CD4-positive, alpha-beta memory T cell (primary cell): ENCODE measurements at regions of chr17 and their contacts with region 1.

Region 1: DNA sequence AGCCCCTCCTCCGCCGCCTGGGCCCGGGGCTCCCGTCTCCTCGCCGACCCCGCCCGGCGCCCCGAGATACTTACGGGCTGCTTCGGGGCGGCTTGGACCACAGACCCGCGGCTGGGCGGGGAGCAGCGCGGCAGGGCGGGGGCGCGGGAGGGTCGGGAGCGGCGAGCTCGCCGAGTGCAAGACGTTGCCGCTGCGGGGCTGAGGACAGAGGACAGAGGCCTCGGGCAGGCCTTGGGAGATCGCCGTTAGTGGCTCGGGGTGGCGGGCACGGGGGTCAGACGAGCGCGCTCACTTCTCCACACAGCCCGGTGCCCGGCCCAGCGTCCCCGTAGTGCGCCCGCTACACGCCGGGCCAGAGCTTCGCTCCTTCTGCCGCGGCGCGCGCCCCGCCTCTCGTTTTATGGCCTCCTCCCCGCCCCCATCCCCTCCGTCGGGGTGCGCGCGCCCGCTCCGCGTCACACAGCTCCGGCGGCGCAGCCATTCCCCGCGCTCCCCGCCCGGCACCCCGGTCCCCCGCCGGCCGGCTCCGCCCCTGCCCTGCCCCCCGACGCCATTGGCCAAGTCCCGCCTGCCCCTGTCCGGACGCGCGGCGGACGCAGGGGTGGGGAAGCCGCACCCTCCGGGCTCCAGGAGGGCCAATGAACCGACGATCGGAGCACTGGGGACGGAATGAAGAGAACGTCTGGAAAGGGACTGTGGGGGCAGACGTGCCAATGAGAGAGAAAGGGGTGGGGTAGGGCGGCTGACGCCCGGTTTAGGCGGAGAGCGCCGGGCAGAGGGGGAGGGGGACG is at the start of gene TOB1:
- DNase-seq: peak; percentile 94 to 97 (median 95)
- H3K4me3 ChIP-seq: peak within 1 kb of the TSS; percentile 87 to 92
- H3K4me3 Mint-ChIP-seq: peak within 1 kb of the TSS; percentile 97 to 100 (median 98)
- H3K27ac ChIP-seq: peak within 1 kb of the TSS; percentile 97
- H3K27ac Mint-ChIP-seq: peak within 1 kb of the TSS; percentile 96 to 100 (median 99)
- H3K4me1 ChIP-seq: peaks cover 67% of the 10 kb centered on the region
- H3K4me1 Mint-ChIP-seq: peaks cover 38 to 73% (median 51%) of the 10 kb centered on the region in 4 donors
- H3K27me3 ChIP-seq: no peaks in the 10 kb centered on the region
- H3K27me3 Mint-ChIP-seq: no peaks in the 10 kb centered on the region
- total RNA-seq, gene TOB1: 93.7 to 104 TPM

Region 2: GRCh38 chr17:50765454-50766221 is 100.5 kb before region 1 on chr17:
- CTCF ChIA-PET with region 1: no interaction called
- POLR2A ChIA-PET with region 1: no interaction called
- intact Hi-C with region 1: no loop called
- DNase-seq: no peak
- H3K4me3 ChIP-seq: no peak overlapping the region
- H3K4me3 Mint-ChIP-seq: no peak overlapping the region
- H3K27ac ChIP-seq: no peak overlapping the region
- H3K27ac Mint-ChIP-seq: peak overlapping the region in 1 of 7 donors; percentile 75
- H3K4me1 ChIP-seq: peaks cover 7% of the 10 kb centered on the region
- H3K4me1 Mint-ChIP-seq: peaks cover 2 to 20% (median 10%) of the 10 kb centered on the region in 4 donors
- H3K27me3 ChIP-seq: no peaks in the 10 kb centered on the region
- H3K27me3 Mint-ChIP-seq: peaks cover 6 to 8% of the 10 kb centered on the region in 2 donors

Region 3: GRCh38 chr17:50783193-50783660 is 83.0 kb before region 1 on chr17:
- CTCF ChIA-PET with region 1: interaction called, 4 read pairs
- POLR2A ChIA-PET with region 1: interaction called, 26 read pairs
- intact Hi-C with region 1: no loop called
- DNase-seq: peak; percentile 70 to 76 (median 72)
- H3K4me3 ChIP-seq: no peak overlapping the region
- H3K4me3 Mint-ChIP-seq: peak overlapping the region in 4 of 8 donors; percentile 45 to 75 (median 62)
- H3K27ac ChIP-seq: no peak overlapping the region
- H3K27ac Mint-ChIP-seq: peak overlapping the region in 3 of 7 donors; percentile 31 to 78 (median 43)
- H3K4me1 ChIP-seq: peaks cover 29% of the 10 kb centered on the region
- H3K4me1 Mint-ChIP-seq: peaks cover 20 to 42% (median 31%) of the 10 kb centered on the region in 4 donors
- H3K27me3 ChIP-seq: no peaks in the 10 kb centered on the region
- H3K27me3 Mint-ChIP-seq: peaks cover 5% of the 10 kb centered on the region in 2 donors

Region 4: DNA sequence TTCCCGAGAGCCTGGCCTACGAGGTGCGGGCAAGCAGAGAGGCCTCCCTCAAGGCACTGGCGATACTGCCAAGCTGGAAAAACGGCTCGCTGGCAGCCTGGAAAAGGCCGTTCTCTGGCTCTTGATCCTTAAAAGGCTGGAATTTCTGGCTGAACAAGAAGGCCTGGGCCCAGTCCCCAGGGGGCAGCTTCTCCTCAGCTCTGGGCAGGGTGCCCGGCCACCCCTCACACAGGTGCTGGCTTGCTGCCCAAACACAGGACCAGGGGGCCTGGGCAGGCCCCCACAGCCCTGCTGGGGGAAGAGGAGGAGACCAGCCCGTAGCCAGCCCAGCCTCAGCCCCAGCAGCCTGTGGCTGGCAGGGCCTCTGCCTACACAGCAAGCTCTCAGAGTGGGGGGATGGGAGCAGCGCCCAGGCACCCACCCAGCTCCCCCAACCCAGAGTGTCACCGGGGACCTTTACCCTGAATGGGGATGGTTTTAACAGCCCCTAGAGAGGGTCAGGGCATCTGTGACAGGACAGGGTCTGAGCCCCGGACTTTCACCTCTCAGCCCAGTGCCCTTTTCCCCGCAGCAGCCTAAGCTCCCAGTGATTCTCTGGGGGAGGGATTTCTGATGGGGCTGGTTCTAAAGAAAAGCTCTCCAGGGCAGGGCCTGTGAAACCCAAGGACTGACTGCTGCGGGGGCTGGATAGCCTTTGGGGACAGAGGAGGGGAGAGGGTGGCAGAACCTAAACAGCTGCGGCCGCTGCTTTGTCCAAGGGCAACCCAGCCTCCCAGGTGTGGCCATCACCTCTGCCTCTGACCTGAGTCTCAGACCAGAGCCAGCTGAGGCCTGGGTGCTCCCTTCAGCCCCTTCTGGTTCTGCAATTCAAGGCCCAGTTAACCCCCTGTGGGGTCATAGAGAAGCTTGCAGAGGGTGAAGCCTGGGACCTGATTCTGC is 38.6 kb after region 1 on chr17:
- CTCF ChIA-PET with region 1: interaction called, 10 read pairs
- POLR2A ChIA-PET with region 1: interaction called, 688 read pairs
- intact Hi-C with region 1: no loop called
- DNase-seq: no peak
- H3K4me3 ChIP-seq: no peak overlapping the region
- H3K4me3 Mint-ChIP-seq: peak overlapping the region in 4 of 8 donors; percentile 22 to 79 (median 65)
- H3K27ac ChIP-seq: peak overlapping the region; percentile 66
- H3K27ac Mint-ChIP-seq: peak overlapping the region; percentile 71 to 97 (median 96)
- H3K4me1 ChIP-seq: peaks cover 66% of the 10 kb centered on the region
- H3K4me1 Mint-ChIP-seq: peaks cover 39 to 72% (median 51%) of the 10 kb centered on the region in 4 donors
- H3K27me3 ChIP-seq: no peaks in the 10 kb centered on the region
- H3K27me3 Mint-ChIP-seq: no peaks in the 10 kb centered on the region

Region 5: GRCh38 chr17:50931144-50931908 is 65.1 kb after region 1 on chr17:
- CTCF ChIA-PET with region 1: interaction called, 4 read pairs
- POLR2A ChIA-PET with region 1: interaction called, 688 read pairs
- intact Hi-C with region 1: loop called (anchors 1 kb)
- DNase-seq: peak; percentile 57 to 68 (median 61)
- H3K4me3 ChIP-seq: peak overlapping the region in 1 of 2 donors; percentile 45
- H3K4me3 Mint-ChIP-seq: peak overlapping the region; percentile 86 to 95 (median 88)
- H3K27ac ChIP-seq: peak overlapping the region; percentile 49
- H3K27ac Mint-ChIP-seq: peak overlapping the region; percentile 75 to 99 (median 96)
- H3K4me1 ChIP-seq: peaks cover 35% of the 10 kb centered on the region
- H3K4me1 Mint-ChIP-seq: peaks cover 14 to 63% (median 36%) of the 10 kb centered on the region in 4 donors
- H3K27me3 ChIP-seq: no peaks in the 10 kb centered on the region
- H3K27me3 Mint-ChIP-seq: no peaks in the 10 kb centered on the region

Region 6: DNA sequence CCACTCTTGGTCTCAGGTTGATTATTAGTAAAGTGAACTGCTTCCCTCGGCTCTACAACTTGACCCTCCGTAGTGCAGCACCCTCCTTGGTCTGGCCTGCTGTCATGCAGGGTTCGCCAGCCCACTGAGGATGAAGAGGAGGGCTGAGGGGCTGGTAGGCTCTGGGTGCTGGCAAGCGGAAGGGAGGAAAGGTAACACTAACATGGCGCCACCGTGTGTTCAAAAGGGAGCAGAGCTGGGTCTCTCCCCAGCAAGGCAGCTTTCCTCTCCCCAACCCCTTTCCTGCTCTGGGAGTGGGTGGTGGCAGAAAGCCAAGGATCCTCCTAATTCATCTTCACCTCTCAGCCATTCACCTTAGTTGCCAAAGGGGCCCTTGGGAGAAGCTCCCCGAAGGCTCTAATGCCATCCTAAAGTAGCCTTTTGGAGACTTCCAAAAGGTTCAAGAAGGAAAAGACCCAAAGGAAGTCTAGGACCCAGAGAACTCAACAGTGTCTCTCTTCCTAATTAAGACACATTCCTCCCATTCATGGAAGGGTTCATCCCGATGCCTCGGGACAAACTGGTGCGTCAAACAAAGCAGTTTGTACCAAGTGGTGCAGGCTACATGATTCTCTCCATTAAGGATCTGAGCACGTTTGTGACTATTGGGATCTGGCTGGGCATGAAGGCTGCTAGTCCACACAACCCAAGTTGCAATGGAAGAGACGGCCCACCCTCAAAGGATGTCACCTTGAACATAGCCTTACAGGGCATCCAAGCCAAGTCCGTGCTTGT is 90.8 kb after region 1 on chr17:
- CTCF ChIA-PET with region 1: interaction called, 96 read pairs
- POLR2A ChIA-PET with region 1: interaction called, 673 read pairs
- intact Hi-C with region 1: loop called (anchors 1 kb)
- DNase-seq: peak; percentile 64 to 69 (median 65)
- H3K4me3 ChIP-seq: no peak overlapping the region
- H3K4me3 Mint-ChIP-seq: peak overlapping the region in 2 of 8 donors; percentile 40 to 67
- H3K27ac ChIP-seq: no peak overlapping the region
- H3K27ac Mint-ChIP-seq: peak overlapping the region in 6 of 7 donors; percentile 32 to 89 (median 76)
- H3K4me1 ChIP-seq: peaks cover 4% of the 10 kb centered on the region
- H3K4me1 Mint-ChIP-seq: peaks cover 1 to 5% (median 4%) of the 10 kb centered on the region in 4 donors
- H3K27me3 ChIP-seq: no peaks in the 10 kb centered on the region
- H3K27me3 Mint-ChIP-seq: peaks cover 0 to 2% of the 10 kb centered on the region in 2 donors

Region 7: GRCh38 chr17:51260125-51260880 is 394.1 kb after region 1 on chr17 and contains the start of gene UTP18:
- CTCF ChIA-PET with region 1: no interaction called
- POLR2A ChIA-PET with region 1: interaction called, 6 read pairs
- intact Hi-C with region 1: loop called (anchors 2 kb)
- DNase-seq: peak; percentile 96 to 98 (median 97)
- H3K4me3 ChIP-seq: peak within 1 kb of the TSS; percentile 74 to 85
- H3K4me3 Mint-ChIP-seq: peak within 1 kb of the TSS; percentile 91 to 98 (median 96)
- H3K27ac ChIP-seq: peak within 1 kb of the TSS; percentile 97
- H3K27ac Mint-ChIP-seq: peak within 1 kb of the TSS; percentile 96 to 99 (median 99)
- H3K4me1 ChIP-seq: peaks cover 72% of the 10 kb centered on the region
- H3K4me1 Mint-ChIP-seq: peaks cover 42 to 84% (median 58%) of the 10 kb centered on the region in 4 donors
- H3K27me3 ChIP-seq: no peaks in the 10 kb centered on the region
- H3K27me3 Mint-ChIP-seq: no peaks in the 10 kb centered on the region
- total RNA-seq, gene UTP18: 44.0 to 44.1 TPM